Gastrocnemius medialis (tissue), 4 donors: ENCODE measurements at regions of chr19 and their contacts with region 1.

Region 1: DNA sequence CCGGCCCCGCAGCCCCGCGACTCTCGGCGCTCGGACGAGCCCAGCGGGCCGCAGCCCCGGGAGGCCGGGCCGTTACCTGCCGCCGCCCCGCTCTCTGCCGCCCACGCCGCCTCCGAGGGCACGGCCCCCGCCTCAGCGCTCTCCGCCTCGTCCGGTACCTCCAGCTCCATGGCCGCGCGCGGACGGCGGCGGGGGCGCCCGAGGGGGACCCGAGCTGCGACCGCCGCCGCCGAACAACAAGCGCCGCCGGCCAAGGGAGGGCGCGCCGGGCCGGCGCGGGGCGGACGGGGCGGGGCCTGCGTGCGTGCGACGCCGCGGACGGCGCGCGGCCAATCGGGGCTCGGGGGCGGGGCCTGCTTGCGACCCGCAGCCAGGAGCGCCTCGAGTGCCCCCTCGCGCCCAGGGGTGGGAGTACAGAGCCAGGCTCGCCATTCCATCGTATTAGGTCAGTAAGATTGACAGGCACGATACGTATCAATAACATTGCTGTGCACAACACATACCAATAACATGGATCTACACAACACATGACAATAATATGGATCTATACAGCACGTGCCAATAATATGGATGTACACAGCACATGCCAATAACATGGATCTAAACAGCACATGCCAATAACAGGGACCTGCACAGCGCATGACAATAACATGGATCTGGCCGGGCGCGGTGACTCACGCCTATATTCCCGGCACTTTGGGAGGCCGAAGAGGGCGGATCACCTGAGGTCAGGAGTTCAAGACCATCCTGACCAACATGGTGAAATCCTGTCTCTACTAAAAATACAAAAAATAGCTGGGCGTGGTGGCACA is at the start of gene PIP5K1C:
- DNase-seq: peak; percentile 73 to 80
- ATAC-seq: peak; percentile 93
- H3K4me3 ChIP-seq: peak within 1 kb of the TSS; percentile 59 to 90 (median 64)
- H3K27ac ChIP-seq: peak within 1 kb of the TSS; percentile 76 to 83 (median 81)
- H3K4me1 ChIP-seq: peaks cover 0 to 19% of the 10 kb centered on the region in 2 donors
- H3K27me3 ChIP-seq: peaks cover 0 to 6% (median 2%) of the 10 kb centered on the region in 3 donors
- CTCF ChIP-seq: peak; percentile 78 to 93 (median 90)
- POLR2A ChIP-seq: peak; percentile 74 to 77
- total RNA-seq, gene PIP5K1C: 8.2 to 18.0 (median 17.3) TPM

Region 2: DNA sequence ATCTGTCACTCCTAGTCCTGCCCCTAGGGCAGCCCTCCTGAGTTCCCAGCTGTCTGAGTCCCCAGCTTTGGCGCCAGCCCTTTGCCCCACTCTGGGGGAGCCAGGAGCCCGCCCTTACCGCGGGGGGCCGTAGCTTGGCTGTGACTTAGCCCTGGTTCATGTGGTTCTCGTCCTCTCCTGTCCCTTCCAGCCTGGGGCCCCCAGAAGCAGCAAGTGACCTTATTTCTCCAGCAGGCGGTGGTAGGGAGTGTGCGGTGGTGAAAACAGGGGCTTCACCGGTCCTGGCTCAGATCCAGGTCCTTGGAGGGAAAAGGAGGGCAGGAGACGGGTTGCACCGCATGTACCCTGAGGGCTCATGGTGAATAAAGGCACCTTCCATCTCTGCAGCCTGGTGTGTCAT is 107.3 kb before region 1 on chr19:
- in situ Hi-C with region 1: no loop called
- intact Hi-C with region 1: no loop called
- DNase-seq: no peak
- ATAC-seq: no peak
- H3K4me3 ChIP-seq: no peak overlapping the region
- H3K27ac ChIP-seq: no peak overlapping the region
- H3K4me1 ChIP-seq: no peaks in the 10 kb centered on the region
- H3K27me3 ChIP-seq: peaks cover 0 to 2% (median 0%) of the 10 kb centered on the region in 3 donors
- CTCF ChIP-seq: no peak
- POLR2A ChIP-seq: no peak

Region 3: GRCh38 chr19:3660493-3661219 is 39.8 kb before region 1 on chr19:
- in situ Hi-C with region 1: loop called in 2 of 4 experiments (anchors 5 kb)
- intact Hi-C with region 1: no loop called
- DNase-seq: peak in 1 of 2 donors; percentile 31
- ATAC-seq: peak in 1 of 2 donors; percentile 19
- H3K4me3 ChIP-seq: no peak overlapping the region
- H3K27ac ChIP-seq: peak overlapping the region in 1 of 4 donors; percentile 16
- H3K4me1 ChIP-seq: peaks cover under 1 to 6% of the 10 kb centered on the region in 2 donors
- H3K27me3 ChIP-seq: no peaks in the 10 kb centered on the region
- CTCF ChIP-seq: no peak
- POLR2A ChIP-seq: no peak

Region 4: DNA sequence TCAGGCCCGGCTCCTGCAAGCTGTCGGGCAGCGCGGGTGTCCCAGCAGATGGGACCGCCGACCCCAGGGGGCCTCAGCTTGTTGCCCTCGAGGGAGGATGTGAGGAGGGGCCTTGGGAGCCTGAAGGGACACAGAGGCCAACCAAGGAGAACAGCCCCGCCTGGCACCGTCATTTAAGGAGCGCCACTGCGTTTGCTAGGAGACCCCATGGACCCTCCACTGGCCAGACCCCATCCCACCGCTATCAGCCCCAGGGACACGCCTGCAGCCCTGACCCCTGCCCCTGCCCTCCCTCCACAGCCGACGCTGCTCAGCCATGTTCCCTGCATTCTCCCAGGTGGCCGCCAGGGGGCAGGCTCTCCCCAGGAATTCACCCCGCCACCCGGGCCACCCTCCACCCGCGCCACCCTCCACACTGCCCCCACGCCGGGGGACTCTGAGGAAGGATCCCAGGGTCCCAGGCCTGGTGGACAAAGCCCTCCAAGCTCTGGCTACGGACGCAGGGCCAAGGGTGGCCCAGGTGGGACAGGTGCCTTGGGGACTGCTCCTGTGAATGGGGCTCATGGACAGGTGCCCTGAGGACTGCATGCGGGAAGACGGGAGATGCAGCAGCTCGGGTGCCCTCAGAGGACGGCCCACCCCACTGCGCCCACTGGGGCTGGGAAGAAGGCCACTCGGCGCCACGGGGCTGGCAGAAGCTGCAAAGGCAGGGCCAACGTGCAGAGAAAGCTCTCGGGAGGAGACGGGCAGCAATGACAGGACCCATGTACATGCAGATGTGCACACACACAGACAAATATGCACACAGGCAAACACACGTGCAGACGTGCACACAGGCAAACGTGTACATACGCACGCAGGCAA is 34.5 kb before region 1 on chr19:
- in situ Hi-C with region 1: loop called in 2 of 4 experiments (anchors 5 kb)
- intact Hi-C with region 1: loop called (anchors 1 kb)
- DNase-seq: peak in 1 of 2 donors; percentile 50
- ATAC-seq: peak; percentile 19 to 57
- H3K4me3 ChIP-seq: no peak overlapping the region
- H3K27ac ChIP-seq: no peak overlapping the region
- H3K4me1 ChIP-seq: peaks cover 22 to 23% of the 10 kb centered on the region in 2 donors
- H3K27me3 ChIP-seq: no peaks in the 10 kb centered on the region
- CTCF ChIP-seq: peak; percentile 85 to 97 (median 97)
- POLR2A ChIP-seq: no peak

Region 5: DNA sequence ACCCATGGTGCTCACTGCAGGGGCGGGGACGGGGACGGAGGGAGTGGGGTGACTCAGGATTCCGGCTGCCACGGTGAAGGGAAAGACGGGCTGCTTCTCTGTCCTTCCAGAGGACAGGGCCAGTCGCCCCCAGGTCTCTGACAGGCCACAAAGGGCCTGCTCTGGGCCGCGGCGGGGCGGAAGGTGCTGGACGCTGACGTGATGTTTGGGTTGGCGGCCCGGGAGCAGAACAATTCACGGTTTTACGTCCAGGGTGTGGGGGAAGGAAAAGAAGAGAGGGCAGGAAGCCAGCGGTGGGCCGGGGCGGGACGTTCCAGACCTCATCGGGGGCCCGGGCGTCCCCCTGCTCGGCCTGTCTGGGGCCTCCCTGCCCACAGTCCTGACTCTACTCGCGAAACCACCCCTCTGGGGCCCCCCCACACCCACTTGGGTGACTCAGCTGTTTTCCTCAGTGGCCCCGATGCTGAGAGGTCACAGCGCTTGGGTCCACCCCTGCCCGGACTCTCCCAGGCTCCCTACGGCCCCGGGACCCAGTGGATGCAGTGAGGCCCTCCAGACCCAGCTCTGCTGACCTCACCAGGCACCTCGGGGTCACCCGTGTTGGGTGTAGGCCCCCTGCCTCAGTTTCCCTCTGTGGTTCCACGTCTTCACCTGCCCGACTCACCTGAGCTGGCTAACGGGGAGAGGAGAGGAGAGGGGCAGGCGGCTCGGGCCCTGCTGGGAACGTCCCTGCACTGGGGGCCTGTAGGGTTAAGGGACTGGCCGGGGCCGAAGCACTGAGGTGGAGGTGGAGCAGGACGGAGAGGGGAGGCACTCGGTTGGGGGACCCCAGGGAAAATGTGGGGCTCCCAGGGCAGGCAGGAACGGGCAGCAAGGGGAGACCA is 29.4 kb before region 1 on chr19:
- in situ Hi-C with region 1: no loop called
- intact Hi-C with region 1: loop called (anchors 1 kb)
- DNase-seq: peak; percentile 42 to 67
- ATAC-seq: peak; percentile 59 to 63
- H3K4me3 ChIP-seq: peak overlapping the region; percentile 36 to 59 (median 38)
- H3K27ac ChIP-seq: peak overlapping the region; percentile 86 to 95 (median 88)
- H3K4me1 ChIP-seq: peaks cover 29 to 34% of the 10 kb centered on the region in 2 donors
- H3K27me3 ChIP-seq: no peaks in the 10 kb centered on the region
- CTCF ChIP-seq: no peak
- POLR2A ChIP-seq: peak; percentile 24 to 46